ENCODE measurements at regions of chr14 and their contacts with region 1.

Region 1: GRCh38 chr14:33839193-33840076 is 111.4 kb downstream of the EGLN3 start:
- DNase-seq: peak; percentile 49
- H3K4me3 Mint-ChIP-seq: no peak overlapping the region
- H3K27ac Mint-ChIP-seq: no peak overlapping the region
- H3K4me1 Mint-ChIP-seq: peaks cover 58% of the 10 kb centered on the region
- H3K27me3 Mint-ChIP-seq: peaks cover 3% of the 10 kb centered on the region

Region 2: DNA sequence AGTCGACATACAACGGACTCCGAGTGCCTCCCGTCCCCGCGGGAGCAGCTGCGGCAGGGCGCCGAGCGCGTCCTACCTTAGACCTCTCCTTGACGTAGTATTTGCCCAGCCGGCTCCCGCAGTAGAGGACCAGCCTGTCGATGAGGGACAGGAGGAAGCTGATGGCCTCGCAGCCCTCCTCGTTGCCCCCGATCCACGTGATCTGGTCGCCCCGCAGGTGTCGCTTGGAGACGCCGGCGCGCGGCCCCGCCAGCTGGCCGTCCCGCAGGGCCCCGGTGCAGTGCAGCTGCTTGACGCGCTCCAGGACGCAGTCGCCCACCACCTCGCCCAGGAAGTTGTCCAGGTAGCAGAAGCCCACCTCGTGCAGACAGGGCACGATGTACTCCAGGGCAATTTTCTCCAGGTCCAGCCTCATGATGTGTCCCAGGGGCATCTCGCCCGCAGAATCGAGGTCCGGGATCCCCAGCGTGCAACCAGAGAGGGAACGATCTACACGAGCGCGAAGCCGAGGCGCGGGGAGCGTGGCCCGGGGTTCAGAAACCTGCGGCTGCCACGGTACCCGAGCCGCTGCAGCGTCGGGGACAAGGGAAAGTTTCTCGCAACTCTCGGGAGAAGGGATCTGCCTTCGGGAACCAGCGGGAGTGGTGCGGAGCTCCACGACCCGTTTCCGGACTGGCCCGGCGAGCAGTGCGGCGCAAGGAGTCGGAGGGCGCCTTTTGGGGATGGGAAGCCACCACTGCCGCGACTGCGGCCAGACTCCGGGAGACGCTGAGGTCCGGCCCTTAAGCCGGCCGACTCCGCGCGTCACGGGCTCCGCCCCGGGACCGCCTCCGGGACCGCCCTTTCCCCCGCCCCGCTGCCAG is 111.1 kb after region 1 on chr14 and contains the start of gene EGLN3:
- intact Hi-C with region 1: loop called (anchors 5 kb)
- DNase-seq: peak; percentile 79
- H3K4me3 Mint-ChIP-seq: peak within 1 kb of the TSS; percentile 80
- H3K27ac Mint-ChIP-seq: peak within 1 kb of the TSS; percentile 70
- H3K4me1 Mint-ChIP-seq: peaks cover 44% of the 10 kb centered on the region
- H3K27me3 Mint-ChIP-seq: peaks cover 43% of the 10 kb centered on the region
- total RNA-seq, gene EGLN3: 8.7 and 11.2 TPM in 2 replicates

Region 3: DNA sequence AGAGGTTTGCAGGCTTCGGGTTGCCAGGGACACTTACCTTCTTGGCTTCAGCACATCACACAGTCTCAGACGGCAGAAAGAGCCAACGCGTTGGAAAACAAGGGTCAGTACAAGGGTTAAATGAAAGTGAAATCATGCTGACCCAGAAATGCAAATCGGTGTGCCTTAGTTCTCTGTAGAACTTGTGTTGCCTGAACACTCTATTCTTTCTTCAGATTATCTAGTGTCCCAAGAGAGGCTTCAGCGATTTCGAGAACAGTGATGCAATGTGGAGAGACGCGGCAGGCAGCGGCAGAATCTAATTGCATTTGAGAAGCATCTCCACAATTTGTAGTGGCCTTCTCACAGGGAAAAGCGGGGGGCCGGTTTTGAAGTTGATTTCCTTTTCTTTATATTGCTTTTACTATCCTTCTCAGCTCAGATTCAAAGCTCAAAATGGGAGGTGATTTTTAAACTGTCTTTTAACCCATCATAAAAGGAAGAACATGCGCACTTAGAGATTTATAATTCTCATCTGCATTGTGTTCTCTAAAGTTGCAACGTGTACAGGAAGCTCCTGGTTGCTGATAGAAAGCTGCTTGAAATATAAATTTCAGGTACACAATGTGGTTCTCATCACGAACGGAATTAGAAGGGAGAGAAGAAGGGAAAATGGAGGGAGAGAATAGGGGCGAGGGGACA is 179.3 kb after region 1 on chr14:
- intact Hi-C with region 1: loop called (anchors 1 kb)
- DNase-seq: peak; percentile 12
- H3K4me3 Mint-ChIP-seq: peak overlapping the region; percentile 80
- H3K27ac Mint-ChIP-seq: peak overlapping the region; percentile 92
- H3K4me1 Mint-ChIP-seq: peaks cover 36% of the 10 kb centered on the region
- H3K27me3 Mint-ChIP-seq: peaks cover 2% of the 10 kb centered on the region

Region 4: DNA sequence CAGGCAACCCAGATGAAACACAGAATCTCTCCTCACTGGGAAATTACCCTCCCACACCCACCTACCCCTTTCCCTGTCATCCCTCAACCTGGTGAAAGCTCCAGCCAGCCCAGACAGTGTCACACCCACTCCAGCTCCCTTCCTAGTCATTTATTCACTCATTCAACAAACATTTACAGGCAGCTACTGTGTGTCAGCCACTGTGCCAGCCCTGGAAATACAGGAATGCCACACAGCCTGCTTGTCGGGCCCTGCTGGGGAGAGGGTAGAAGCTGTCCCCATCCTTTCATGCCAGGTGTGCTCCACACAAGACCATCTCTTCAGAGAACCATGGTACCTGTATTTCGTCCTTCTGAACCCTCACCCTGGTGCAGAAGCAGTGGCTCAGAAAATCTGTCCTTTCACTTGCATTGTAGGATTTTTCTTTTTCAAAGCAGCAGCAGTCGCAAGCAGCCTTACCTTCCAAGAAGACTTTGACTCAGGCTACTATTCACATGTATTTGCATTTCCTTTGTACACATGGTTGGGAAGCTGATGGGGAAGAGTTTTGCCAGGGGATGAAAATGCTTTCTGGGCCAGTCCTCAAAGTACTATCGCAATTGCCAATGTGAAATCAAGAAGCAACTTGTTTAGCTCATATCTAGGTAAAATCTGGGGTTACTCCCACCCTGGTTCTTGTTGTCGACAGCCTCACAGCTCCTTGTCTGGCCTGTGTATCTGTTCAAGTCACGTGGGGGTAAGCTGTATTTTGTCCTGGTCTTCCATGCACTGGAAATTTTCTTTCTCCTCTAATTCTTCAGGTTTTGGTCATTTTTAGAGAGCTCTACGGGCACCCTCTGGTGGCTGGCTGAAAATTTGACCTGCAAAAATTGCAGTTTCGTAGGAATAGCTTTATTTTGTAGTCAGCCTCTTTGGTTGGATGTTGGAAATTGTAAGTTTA is 258.9 kb after region 1 on chr14:
- intact Hi-C with region 1: loop called (anchors 1 kb)
- DNase-seq: peak; percentile 21
- H3K4me3 Mint-ChIP-seq: no peak overlapping the region
- H3K27ac Mint-ChIP-seq: no peak overlapping the region
- H3K4me1 Mint-ChIP-seq: peaks cover 61% of the 10 kb centered on the region
- H3K27me3 Mint-ChIP-seq: peaks cover 3% of the 10 kb centered on the region

Region 5: DNA sequence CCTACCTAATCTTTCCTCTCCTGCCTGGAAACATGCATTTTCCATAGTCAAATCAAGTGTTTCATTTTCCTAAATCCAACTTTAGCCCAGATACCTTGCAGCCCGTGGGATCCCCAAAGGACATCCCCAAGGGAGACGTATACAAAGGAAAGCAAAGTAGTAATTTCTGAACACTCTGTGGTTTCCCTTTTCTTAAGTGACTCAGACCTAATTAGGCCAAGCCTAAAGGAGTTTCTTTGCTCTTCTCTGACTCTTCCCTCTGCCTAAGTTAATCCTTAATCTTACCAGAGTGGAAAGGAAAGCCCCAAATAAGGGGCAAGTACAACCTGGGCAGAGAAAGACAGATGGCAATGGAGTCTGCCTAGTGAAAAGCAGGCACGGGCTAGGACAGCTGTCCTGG is 372.3 kb after region 1 on chr14:
- intact Hi-C with region 1: loop called (anchors 5 kb)
- DNase-seq: no peak
- H3K4me3 Mint-ChIP-seq: peak overlapping the region; percentile 22
- H3K27ac Mint-ChIP-seq: peak overlapping the region; percentile 47
- H3K4me1 Mint-ChIP-seq: peaks cover 22% of the 10 kb centered on the region
- H3K27me3 Mint-ChIP-seq: peaks cover 5% of the 10 kb centered on the region

Region 6: GRCh38 chr14:34300882-34301734 is 461.7 kb after region 1 on chr14:
- intact Hi-C with region 1: loop called (anchors 1 kb)
- DNase-seq: no peak
- H3K4me3 Mint-ChIP-seq: no peak overlapping the region
- H3K27ac Mint-ChIP-seq: no peak overlapping the region
- H3K4me1 Mint-ChIP-seq: no peaks in the 10 kb centered on the region
- H3K27me3 Mint-ChIP-seq: peaks cover 1% of the 10 kb centered on the region

Region 7: GRCh38 chr14:34322940-34323418 is 483.5 kb after region 1 on chr14:
- intact Hi-C with region 1: loop called (anchors 2 kb)
- DNase-seq: peak; percentile 41
- H3K4me3 Mint-ChIP-seq: no peak overlapping the region
- H3K27ac Mint-ChIP-seq: no peak overlapping the region
- H3K4me1 Mint-ChIP-seq: no peaks in the 10 kb centered on the region
- H3K27me3 Mint-ChIP-seq: peaks cover 6% of the 10 kb centered on the region